ENCODE measurements at regions of chr12 and their contacts with region 1.

Region 1: DNA sequence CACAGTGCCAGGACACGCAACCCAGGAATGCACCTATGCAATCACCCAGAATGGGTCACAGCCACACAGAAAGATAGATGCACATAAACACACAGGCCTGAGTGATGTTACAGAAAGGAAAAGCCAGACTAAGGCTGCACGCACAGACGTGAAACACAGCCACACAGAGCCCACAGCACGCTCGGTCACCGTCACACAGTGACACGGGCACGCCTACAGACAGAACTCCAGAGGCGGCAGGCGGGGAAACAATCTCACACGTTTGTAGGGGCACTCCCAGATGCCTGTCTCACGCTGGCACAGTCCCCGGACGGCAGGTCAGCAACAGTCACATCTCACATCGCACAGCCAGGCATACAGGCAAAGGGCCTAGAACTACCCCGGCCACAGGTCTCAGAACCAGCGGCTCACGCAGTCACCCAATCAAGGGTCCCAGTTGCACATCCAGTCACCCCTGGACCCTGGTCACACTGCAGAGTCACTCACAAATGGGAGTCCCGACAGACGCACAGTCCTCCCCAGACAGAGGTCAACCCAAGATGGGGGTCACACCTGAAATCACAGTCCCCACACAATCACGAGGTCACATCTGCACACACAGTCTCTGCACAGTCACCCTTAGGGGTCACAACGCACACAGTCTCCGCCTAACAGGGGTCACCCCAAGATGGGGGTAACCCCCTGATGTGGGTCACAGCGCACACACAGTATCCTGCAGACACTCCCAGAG is 790 bp downstream of the SSH1 start:
- DNase-seq: no peak
- ATAC-seq: peak; percentile 7
- H3K4me3 Mint-ChIP-seq: peak overlapping the region; percentile 94
- H3K27ac Mint-ChIP-seq: peak overlapping the region; percentile 88
- H3K4me1 Mint-ChIP-seq: peaks cover 59% of the 10 kb centered on the region
- H3K27me3 Mint-ChIP-seq: no peaks in the 10 kb centered on the region
- CTCF ChIP-seq: no peak

Region 2: DNA sequence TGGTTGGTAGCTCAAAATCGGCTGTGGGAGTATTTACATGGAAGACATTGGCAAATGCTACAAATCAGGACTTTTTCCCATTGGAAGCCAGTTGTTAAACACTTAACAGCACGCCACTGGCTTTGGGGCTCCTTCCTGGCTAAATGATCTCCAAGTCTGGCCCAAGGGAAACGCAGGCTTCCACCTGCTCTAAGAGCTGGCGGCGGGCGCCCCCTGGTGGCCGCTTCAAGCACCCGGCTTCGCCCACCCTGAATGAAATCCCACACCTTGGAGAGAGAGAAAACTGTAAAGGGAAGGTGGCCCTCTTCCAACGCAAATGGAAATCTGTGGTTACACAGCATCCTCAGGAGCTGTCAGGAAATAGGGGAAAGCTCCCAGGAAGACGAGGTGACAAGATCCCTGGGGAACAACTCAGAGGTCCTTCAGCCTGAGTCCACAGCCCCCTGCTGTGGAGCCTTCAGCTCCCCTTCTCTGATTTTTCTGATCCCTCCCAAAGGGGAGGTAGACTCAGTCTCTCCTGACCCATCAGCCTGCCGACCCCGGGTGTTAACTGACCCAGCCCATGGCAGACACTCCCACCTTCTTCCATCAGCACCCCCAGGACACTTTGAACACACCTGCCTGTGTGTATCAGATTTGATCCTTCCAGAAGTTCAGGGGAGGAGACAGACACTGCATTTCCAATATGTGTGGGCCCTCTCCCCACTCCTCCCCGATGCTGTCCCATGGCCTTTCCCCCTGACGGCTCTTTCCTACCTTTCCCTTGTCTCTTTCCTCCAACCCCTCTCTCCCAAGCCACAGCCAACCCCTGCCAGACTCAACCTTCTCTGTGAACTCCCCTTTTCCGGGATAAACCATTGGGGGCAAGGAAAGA is 238.3 kb before region 1 on chr12:
- CTCF ChIA-PET with region 1: no interaction called
- POLR2A ChIA-PET with region 1: no interaction called
- intact Hi-C with region 1: loop called (anchors 5 kb)
- DNase-seq: peak; percentile 76
- ATAC-seq: peak; percentile 40
- H3K4me3 Mint-ChIP-seq: peak overlapping the region; percentile 19
- H3K27ac Mint-ChIP-seq: peak overlapping the region; percentile 53
- H3K4me1 Mint-ChIP-seq: peaks cover 70% of the 10 kb centered on the region
- H3K27me3 Mint-ChIP-seq: no peaks in the 10 kb centered on the region
- CTCF ChIP-seq: peak; percentile 60

Region 3: DNA sequence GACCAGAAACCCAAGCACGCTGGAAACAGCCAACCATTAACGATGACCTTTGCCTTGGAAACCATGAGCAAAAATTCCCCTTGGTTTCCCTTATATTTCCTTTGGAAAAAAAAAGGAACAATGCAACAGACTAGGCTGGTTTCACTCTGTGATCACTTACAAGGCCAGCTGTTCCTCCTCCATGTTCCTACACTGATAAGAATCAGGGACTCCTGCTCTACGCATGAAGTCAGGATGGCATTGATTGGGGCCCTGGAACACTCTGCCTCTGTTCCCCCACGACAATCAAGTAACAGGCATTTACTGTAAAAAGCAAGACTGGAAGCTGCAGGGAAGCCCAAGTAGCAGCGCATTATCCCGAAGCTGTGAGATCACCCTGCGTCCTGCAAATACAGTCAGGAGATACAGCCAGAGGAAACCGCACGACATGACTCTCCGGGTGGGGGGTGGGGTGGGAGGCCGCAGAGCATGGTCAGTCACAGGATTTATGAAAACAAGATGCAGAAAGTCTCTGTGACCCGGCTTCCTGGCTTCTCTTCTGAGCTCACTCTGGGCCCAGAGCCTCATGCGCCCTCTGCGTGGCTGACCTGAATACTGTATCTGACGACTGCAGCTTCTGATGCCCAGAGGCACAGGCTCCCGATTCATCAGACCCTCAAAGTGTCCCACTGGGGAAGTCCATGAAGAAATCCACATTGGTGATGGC is 30.3 kb before region 1 on chr12:
- CTCF ChIA-PET with region 1: interaction called, 3 read pairs
- POLR2A ChIA-PET with region 1: interaction called, 3 read pairs
- intact Hi-C with region 1: loop called (anchors 5 kb)
- DNase-seq: no peak
- ATAC-seq: peak; percentile 66
- H3K4me3 Mint-ChIP-seq: peak overlapping the region; percentile 44
- H3K27ac Mint-ChIP-seq: peak overlapping the region; percentile 66
- H3K4me1 Mint-ChIP-seq: peaks cover 48% of the 10 kb centered on the region
- H3K27me3 Mint-ChIP-seq: no peaks in the 10 kb centered on the region
- CTCF ChIP-seq: no peak

Region 4: GRCh38 chr12:108838194-108839017 is 18.2 kb before region 1 on chr12:
- CTCF ChIA-PET with region 1: no interaction called
- POLR2A ChIA-PET with region 1: interaction called, 19 read pairs
- intact Hi-C with region 1: no loop called
- DNase-seq: no peak
- ATAC-seq: peak; percentile 95
- H3K4me3 Mint-ChIP-seq: peak overlapping the region; percentile 9
- H3K27ac Mint-ChIP-seq: peak overlapping the region; percentile 79
- H3K4me1 Mint-ChIP-seq: peaks cover 17% of the 10 kb centered on the region
- H3K27me3 Mint-ChIP-seq: no peaks in the 10 kb centered on the region
- CTCF ChIP-seq: no peak

Region 5: GRCh38 chr12:108939594-108939993 is 83.0 kb after region 1 on chr12:
- CTCF ChIA-PET with region 1: no interaction called
- POLR2A ChIA-PET with region 1: no interaction called
- intact Hi-C with region 1: no loop called
- DNase-seq: no peak
- ATAC-seq: peak; percentile 89
- H3K4me3 Mint-ChIP-seq: no peak overlapping the region
- H3K27ac Mint-ChIP-seq: no peak overlapping the region
- H3K4me1 Mint-ChIP-seq: peaks cover 2% of the 10 kb centered on the region
- H3K27me3 Mint-ChIP-seq: peaks cover 6% of the 10 kb centered on the region
- CTCF ChIP-seq: no peak

Measured in activated B cell treated with CpG ODN at 0.5 μM for 24 hours (primary cell).